GM12878 (cell line): ENCODE measurements at regions of chr5 and their contacts with region 1.

Region 1: DNA sequence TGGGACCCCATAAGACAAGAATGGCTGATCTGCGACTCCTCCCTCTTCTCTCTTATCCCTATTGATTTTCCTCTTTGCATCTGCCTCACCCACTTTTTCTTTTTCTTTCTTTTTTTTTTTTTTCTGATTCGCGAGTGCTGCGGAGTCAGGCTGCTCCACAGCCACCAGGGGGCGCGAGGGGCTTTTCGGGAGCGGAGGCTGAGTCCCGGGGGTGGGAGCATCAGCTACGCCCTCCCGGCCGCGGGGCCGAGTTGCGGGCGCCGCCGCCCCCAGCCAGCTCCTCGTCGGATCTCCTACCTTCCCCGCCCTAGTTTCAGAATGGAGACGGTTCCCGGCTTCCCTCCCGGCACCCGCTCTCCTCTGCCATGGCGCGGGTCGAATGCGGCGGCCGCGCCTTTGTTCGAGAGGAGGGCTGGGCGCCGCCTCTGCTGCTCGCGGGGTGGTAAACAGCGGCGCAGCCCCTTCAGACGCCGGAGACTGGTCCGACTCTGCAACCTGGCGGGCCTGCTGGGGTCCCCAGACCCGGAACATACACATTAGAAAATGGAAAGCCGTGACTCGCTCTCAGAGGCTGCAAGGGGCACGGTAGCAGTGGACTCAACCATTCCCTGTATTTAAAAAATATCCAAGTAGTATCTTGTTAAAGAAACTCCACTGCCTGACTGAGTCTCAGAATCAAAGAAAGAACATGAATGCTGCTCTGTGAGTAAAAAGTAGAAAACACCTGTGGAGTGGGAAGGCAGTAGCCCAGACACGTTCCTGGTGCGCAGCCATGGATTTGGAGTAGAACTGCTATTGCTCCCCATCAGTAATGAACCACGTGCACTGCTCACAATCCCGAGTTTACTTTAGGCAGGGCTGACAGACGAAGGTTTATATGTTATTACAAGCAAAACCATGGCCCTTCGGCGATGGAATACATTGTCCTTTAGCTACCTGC is 55.7 kb downstream of the DPYSL3 start:
- DNase-seq: no peak
- ATAC-seq: peak; percentile 84
- H3K4me3 ChIP-seq: peak overlapping the region; percentile 64
- H3K27ac ChIP-seq: no peak overlapping the region
- H3K4me1 ChIP-seq: no peaks in the 10 kb centered on the region
- H3K27me3 ChIP-seq: peaks cover 4 to 14% of the 10 kb centered on the region in 2 experiments
- CTCF ChIP-seq: peak; percentile 70 to 82 (median 79)
- EP300 ChIP-seq: no peak
- POLR2A ChIP-seq: no peak
- RAD21 ChIP-seq: peak; percentile 71

Region 2: DNA sequence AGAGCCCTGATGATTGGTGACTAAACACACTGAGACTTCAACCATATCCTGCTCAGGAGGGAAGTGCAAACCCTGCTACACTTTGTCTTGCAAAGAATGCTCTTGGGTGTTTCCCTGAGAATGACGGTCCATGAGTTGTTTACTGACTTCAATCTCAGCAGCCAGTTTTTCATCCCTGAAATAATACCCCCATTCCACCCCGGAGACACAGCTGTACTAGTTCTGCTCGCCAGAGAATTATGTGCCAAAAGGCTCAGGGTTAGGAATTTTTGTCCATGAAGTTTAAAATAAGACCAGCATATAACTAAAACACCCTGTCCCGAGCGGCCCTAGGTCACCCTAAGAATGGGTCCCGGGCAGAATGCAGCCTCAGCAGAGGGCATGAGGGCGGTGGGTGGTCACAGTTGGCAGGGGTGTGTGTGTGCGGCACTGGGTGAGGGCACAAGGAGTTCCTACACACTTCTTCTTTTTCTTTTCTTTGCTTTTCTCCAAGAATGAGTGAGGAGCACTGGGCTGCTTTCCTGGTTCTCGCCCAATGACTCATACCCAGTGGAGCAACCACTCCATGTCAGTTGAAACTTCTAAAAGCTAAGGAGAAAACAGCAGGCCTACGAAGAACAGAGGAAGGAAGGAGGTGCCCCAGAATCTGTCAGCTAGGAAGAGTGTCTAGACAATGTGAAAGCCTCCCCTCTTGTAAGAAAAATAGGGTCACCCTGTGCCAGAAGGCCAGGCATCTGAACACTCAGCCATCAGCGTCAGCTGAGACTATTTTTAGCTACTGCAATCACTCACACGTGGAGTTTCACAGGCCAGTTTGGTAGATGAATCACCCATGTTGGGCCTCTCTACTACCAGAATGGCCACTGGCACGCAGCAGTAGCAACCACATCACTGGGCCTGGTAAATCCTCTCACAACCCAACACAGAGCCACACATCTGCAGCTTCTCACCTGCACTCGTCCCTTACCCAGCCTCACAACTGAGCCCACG is 50.2 kb before region 1 on chr5:
- CTCF ChIA-PET with region 1: no interaction called
- POLR2A ChIA-PET with region 1: no interaction called
- RAD21 ChIA-PET with region 1: no interaction called
- SMC1A ChIA-PET with region 1: no interaction called
- in situ Hi-C with region 1: no loop called
- intact Hi-C with region 1: loop called (anchors 2 kb)
- DNase-seq: peak; percentile 63
- ATAC-seq: peak; percentile 89
- H3K4me3 ChIP-seq: no peak overlapping the region
- H3K27ac ChIP-seq: no peak overlapping the region
- H3K4me1 ChIP-seq: peaks cover 10% of the 10 kb centered on the region; the same call in 1 of the 2 replicates
- H3K27me3 ChIP-seq: no peaks in the 10 kb centered on the region
- CTCF ChIP-seq: no peak
- EP300 ChIP-seq: peak; percentile 70 to 88; a peak in 3 of 4 replicates
- POLR2A ChIP-seq: no peak
- RAD21 ChIP-seq: no peak

Region 3: DNA sequence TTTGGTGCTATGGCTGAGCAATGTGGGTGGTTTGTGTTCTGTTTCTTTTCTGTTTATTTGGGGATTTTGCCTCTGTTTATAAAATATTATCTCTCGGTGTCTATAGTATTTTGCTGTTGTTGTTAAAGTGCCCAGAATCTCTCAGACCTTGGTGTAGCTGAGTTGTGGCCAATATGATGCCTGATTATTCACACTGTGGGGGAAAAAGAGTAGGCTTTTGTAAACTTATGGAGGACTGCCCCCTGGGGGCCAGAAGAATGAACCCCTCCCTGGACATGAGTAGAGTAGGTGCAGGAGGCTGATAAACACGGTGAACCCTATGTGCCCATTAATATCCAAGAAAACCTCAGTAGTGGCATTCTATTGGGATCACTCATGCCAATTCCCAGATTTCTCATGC is 104.7 kb after region 1 on chr5:
- CTCF ChIA-PET with region 1: interaction called, 9 read pairs
- POLR2A ChIA-PET with region 1: no interaction called
- RAD21 ChIA-PET with region 1: interaction called, 3 read pairs
- SMC1A ChIA-PET with region 1: interaction called, 3 read pairs
- in situ Hi-C with region 1: loop called (anchors 5 kb)
- intact Hi-C with region 1: loop called (anchors 1 kb)
- DNase-seq: no peak
- ATAC-seq: peak; percentile 98
- H3K4me3 ChIP-seq: no peak overlapping the region
- H3K27ac ChIP-seq: no peak overlapping the region
- H3K4me1 ChIP-seq: no peaks in the 10 kb centered on the region
- H3K27me3 ChIP-seq: no peaks in the 10 kb centered on the region
- CTCF ChIP-seq: peak; percentile 35 to 61 (median 48); a peak in 5 of 6 replicates
- EP300 ChIP-seq: no peak
- POLR2A ChIP-seq: no peak
- RAD21 ChIP-seq: peak; percentile 72

Region 4: GRCh38 chr5:147822686-147823491 is 368.7 kb after region 1 on chr5:
- CTCF ChIA-PET with region 1: no interaction called
- POLR2A ChIA-PET with region 1: no interaction called
- RAD21 ChIA-PET with region 1: no interaction called
- SMC1A ChIA-PET with region 1: no interaction called
- in situ Hi-C with region 1: no loop called
- intact Hi-C with region 1: loop called (anchors 10 kb)
- DNase-seq: peak; percentile 12
- ATAC-seq: peak; percentile 94
- H3K4me3 ChIP-seq: no peak overlapping the region
- H3K27ac ChIP-seq: no peak overlapping the region
- H3K4me1 ChIP-seq: no peaks in the 10 kb centered on the region
- H3K27me3 ChIP-seq: no peaks in the 10 kb centered on the region; a peak in 1 of 4 replicates
- CTCF ChIP-seq: peak; percentile 91 to 95 (median 93)
- EP300 ChIP-seq: no peak
- POLR2A ChIP-seq: no peak
- RAD21 ChIP-seq: peak; percentile 94